PC-3 (cell line): ENCODE measurements at regions of chr5 and their contacts with region 1.

Region 1: GRCh38 chr5:75611311-75612225 is at the start of gene ANKDD1B:
- DNase-seq: peak; percentile 83
- ATAC-seq: peak; percentile 90
- H3K4me3 ChIP-seq: peak within 1 kb of the TSS; percentile 68
- H3K27ac ChIP-seq: peak within 1 kb of the TSS; percentile 90
- H3K4me1 ChIP-seq: peaks cover 35% of the 10 kb centered on the region
- H3K27me3 ChIP-seq: no peaks in the 10 kb centered on the region
- CTCF ChIP-seq: no peak
- total RNA-seq, gene ANKDD1B: 0.04 TPM in 1 of 2 replicates, not detected in the other

Region 2: DNA sequence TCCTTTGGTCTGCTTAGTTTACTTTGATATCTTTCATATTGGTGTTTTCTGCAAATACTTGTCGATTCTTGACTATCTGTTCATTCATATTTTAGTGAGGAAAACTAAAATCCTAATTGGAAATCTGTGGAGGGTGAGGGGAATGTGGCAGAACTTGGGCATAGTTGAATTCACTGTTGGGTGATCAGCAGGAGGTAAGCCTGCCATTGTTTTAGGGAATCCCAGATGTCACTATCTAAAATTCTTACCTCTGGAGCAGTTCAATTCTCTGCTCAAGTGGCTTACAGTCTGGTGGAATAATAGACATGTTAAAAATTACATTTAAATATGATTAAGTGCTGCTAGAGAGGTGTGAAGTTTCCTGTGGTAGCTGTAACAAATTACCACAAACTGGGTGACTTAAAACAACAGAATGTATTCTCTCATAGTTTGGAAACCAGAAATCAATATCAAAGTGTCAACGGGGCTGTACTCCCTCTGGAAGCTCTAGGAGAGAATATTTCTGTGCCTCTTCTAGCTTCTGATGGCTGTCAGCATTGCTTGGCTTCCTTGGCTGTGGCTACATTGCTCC is 468.9 kb before region 1 on chr5:
- CTCF ChIA-PET with region 1: no interaction called
- POLR2A ChIA-PET with region 1: no interaction called
- intact Hi-C with region 1: no loop called
- DNase-seq: no peak
- ATAC-seq: no peak
- H3K4me3 ChIP-seq: no peak overlapping the region
- H3K27ac ChIP-seq: no peak overlapping the region
- H3K4me1 ChIP-seq: no peaks in the 10 kb centered on the region
- H3K27me3 ChIP-seq: no peaks in the 10 kb centered on the region
- CTCF ChIP-seq: no peak

Region 3: GRCh38 chr5:75656311-75657003 is 44.9 kb after region 1 on chr5:
- CTCF ChIA-PET with region 1: no interaction called
- POLR2A ChIA-PET with region 1: no interaction called
- intact Hi-C with region 1: no loop called
- DNase-seq: no peak
- ATAC-seq: no peak
- H3K4me3 ChIP-seq: no peak overlapping the region
- H3K27ac ChIP-seq: no peak overlapping the region
- H3K4me1 ChIP-seq: peaks cover 8% of the 10 kb centered on the region
- H3K27me3 ChIP-seq: no peaks in the 10 kb centered on the region
- CTCF ChIP-seq: no peak

Region 4: DNA sequence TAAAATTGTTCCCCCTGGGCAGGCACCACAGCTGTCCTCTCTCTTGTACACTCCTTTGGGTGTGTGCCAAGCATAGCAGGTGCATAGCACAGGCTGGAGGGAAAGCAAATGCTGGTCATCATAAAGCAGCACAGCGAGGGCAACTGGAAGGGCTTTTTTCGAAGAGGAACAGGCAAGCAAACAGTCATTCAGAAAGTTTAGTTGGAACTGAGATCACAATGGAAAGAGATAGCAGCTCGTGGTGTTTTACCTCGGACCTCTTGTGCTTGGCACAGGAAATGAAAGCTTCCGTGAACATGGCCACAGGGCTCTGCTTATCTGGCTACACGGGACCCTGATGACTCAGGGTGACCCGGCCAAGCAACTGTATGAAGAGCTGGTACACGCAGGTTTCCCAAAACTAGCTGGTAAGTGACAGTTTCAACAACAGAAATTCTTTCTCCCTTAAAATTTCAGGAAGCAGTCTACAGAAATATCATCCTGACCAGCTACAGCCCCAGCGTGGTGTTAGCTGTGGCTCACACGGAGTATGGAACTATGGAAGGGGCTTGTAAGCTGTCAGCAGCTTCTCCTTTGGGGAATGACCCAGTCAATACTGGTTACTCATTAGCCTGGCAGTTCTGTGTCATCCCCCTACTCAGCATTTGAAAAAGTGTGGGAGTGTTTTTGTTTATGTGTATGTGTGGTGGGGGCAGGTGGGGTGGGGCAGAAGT is 57.6 kb after region 1 on chr5:
- CTCF ChIA-PET with region 1: no interaction called
- POLR2A ChIA-PET with region 1: interaction called, 11 read pairs
- intact Hi-C with region 1: no loop called
- DNase-seq: peak; percentile 43
- ATAC-seq: peak; percentile 72
- H3K4me3 ChIP-seq: peak overlapping the region; percentile 42; the same call in 1 of the 2 replicates
- H3K27ac ChIP-seq: peak overlapping the region; percentile 36; the same call in 1 of the 2 replicates
- H3K4me1 ChIP-seq: peaks cover 16% of the 10 kb centered on the region
- H3K27me3 ChIP-seq: no peaks in the 10 kb centered on the region
- CTCF ChIP-seq: no peak

Region 5: GRCh38 chr5:75734913-75735789 is 123.6 kb after region 1 on chr5:
- CTCF ChIA-PET with region 1: no interaction called
- POLR2A ChIA-PET with region 1: no interaction called
- intact Hi-C with region 1: no loop called
- DNase-seq: peak; percentile 46
- ATAC-seq: peak; percentile 94
- H3K4me3 ChIP-seq: no peak overlapping the region
- H3K27ac ChIP-seq: no peak overlapping the region
- H3K4me1 ChIP-seq: no peaks in the 10 kb centered on the region
- H3K27me3 ChIP-seq: peaks cover 8% of the 10 kb centered on the region; the same call in 1 of the 2 replicates
- CTCF ChIP-seq: peak; percentile 66